ENCODE measurements at regions of chr7 and their contacts with region 1.

Region 1: DNA sequence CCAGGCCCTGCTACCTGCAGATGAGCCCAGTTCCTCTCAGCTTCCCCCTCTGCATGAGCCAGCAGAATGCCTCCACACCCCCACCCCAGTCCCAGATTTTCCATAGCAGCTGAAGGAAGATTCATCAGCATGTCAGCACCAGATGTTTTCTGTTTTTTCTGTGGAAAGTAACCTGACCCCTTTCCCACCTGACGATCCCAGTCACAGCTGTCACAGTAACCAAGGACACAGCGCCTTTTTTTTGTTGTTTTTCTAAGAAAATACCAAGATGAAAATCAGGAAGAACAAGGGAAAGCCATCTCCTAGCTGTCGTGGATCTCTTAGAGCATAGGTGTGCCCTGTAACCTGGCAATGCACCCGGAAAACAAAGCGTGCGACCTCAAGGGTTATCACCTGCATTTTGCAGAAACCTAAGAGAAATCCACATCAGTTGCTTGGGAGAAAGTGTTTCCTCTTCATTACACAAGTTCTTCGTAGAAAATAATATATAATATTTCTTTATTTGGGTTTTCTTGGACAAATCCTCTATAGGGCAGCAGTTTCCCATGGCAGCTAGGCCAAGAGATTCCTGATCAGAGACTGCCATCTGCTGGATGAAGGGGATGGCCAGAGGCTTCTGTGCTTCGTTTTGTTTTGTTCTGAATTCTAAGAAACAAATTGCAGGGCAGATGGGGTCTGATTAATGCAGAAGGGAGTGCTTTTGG is 401.9 kb downstream of the TNS3 start:
- DNase-seq: peak; percentile 49
- ATAC-seq: peak; percentile 93
- H3K4me3 ChIP-seq: no peak overlapping the region
- H3K27ac ChIP-seq: no peak overlapping the region
- H3K4me1 ChIP-seq: peaks cover 14% of the 10 kb centered on the region
- H3K27me3 ChIP-seq: peaks cover 0 to 7% of the 10 kb centered on the region in 2 experiments; a peak in 2 of 5 replicates
- CTCF ChIP-seq: peak; percentile 80
- EP300 ChIP-seq: no peak
- POLR2A ChIP-seq: no peak
- RAD21 ChIP-seq: peak; percentile 78; the same call in 1 of the 2 replicates

Region 2: DNA sequence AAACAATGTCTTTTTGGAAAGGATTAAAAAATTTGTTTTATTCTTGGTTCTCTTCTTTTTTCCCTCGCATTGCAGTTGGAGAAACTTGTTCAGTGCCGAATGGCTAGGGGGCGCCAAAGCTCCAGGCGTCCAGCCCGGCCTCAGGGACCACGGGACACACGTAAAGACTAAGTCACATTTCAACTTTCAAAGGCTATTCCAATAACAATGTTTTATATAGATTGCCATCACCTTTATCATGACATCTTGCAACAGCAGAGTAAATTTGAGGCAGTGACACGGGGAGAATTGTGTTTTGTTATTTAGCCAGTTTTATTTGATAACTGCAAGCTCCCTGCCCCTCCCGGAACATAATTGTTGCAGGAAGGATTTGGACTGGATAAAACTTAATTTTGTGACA is 1256.7 kb before region 1 on chr7:
- CTCF ChIA-PET with region 1: interaction called, 6 read pairs
- POLR2A ChIA-PET with region 1: no interaction called
- in situ Hi-C with region 1: loop called (anchors 10 kb)
- intact Hi-C with region 1: loop called (anchors 2 kb)
- DNase-seq: peak; percentile 23
- ATAC-seq: peak; percentile 72
- H3K4me3 ChIP-seq: no peak overlapping the region
- H3K27ac ChIP-seq: no peak overlapping the region
- H3K4me1 ChIP-seq: peaks cover 20% of the 10 kb centered on the region; the same call in 1 of the 2 replicates
- H3K27me3 ChIP-seq: peaks cover 7 to 48% of the 10 kb centered on the region in 2 experiments; a peak in 4 of 5 replicates
- CTCF ChIP-seq: peak; percentile 86
- EP300 ChIP-seq: no peak
- POLR2A ChIP-seq: no peak
- RAD21 ChIP-seq: peak; percentile 73

Region 3: GRCh38 chr7:46369933-46370654 is 809.9 kb before region 1 on chr7:
- CTCF ChIA-PET with region 1: no interaction called
- POLR2A ChIA-PET with region 1: no interaction called
- in situ Hi-C with region 1: loop called (anchors 10 kb)
- intact Hi-C with region 1: no loop called
- DNase-seq: no peak
- ATAC-seq: no peak
- H3K4me3 ChIP-seq: no peak overlapping the region
- H3K27ac ChIP-seq: no peak overlapping the region
- H3K4me1 ChIP-seq: no peaks in the 10 kb centered on the region
- H3K27me3 ChIP-seq: no peaks in the 10 kb centered on the region
- CTCF ChIP-seq: no peak
- EP300 ChIP-seq: no peak
- POLR2A ChIP-seq: no peak
- RAD21 ChIP-seq: no peak

Region 4: GRCh38 chr7:47088329-47089067 is 91.5 kb before region 1 on chr7:
- CTCF ChIA-PET with region 1: interaction called, 5 read pairs
- POLR2A ChIA-PET with region 1: no interaction called
- in situ Hi-C with region 1: loop called (anchors 5 kb)
- intact Hi-C with region 1: loop called (anchors 1 kb)
- DNase-seq: peak; percentile 46
- ATAC-seq: peak; percentile 99
- H3K4me3 ChIP-seq: no peak overlapping the region
- H3K27ac ChIP-seq: no peak overlapping the region
- H3K4me1 ChIP-seq: no peaks in the 10 kb centered on the region
- H3K27me3 ChIP-seq: 0 out of 5 replicates have a peak, but pooled peaks cover 0 to 7% of the 10 kb centered on the region in 2 experiments
- CTCF ChIP-seq: peak; percentile 87
- EP300 ChIP-seq: no peak
- POLR2A ChIP-seq: no peak
- RAD21 ChIP-seq: peak; percentile 79